WTC11 (cell line): ENCODE measurements at regions of chr2 and their contacts with region 1.

Region 1: DNA sequence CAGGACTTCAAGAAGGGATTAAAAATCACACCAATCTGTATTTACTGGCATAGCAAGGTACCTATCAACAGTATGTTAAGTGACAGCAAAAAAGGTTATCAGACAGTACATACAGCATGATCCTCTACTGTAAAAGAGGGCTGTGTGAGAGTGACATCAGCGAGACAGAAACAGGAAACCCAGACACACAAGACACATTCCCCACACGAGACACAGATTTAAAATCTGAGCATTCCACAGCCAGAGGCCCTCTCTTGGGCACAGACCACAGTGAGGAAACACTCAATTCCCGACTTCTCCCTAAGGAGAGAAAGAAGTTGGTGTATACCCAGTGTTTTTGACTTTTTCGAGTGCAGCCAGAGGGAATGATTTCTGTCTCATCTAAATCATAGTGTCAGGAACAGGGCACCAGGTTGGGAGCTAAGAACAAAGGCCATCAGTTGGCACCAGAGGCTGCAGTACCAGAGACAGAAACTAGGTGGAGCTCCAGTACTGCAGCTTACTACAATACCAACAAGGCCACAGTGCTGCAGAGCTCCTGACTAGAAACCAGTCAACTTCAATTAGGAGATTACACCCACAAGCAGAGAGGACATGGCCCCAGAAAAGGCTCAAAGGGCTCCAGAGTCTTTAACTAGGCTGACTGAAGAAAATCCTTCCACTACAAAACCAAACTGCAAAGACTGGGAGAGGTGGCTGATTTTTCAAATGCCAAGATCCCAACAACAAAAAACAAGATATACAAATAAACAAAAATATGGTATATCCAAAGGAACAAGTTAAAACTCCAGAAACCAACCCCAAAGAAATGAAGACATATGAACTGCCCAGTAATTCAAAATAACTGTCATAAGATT is 41.0 kb downstream of the UNC50 start:
- DNase-seq: peak; percentile 85
- ATAC-seq: peak; percentile 96
- H3K4me3 Mint-ChIP-seq: no peak overlapping the region
- H3K27ac Mint-ChIP-seq: no peak overlapping the region
- H3K4me1 Mint-ChIP-seq: peaks cover 8% of the 10 kb centered on the region
- H3K27me3 Mint-ChIP-seq: no peaks in the 10 kb centered on the region
- CTCF ChIP-seq: peak; percentile 97

Region 2: GRCh38 chr2:97911206-97911921 is 738.0 kb before region 1 on chr2:
- CTCF ChIA-PET with region 1: no interaction called
- POLR2A ChIA-PET with region 1: no interaction called
- DNase-seq: no peak
- ATAC-seq: no peak
- H3K4me3 Mint-ChIP-seq: no peak overlapping the region
- H3K27ac Mint-ChIP-seq: no peak overlapping the region
- H3K4me1 Mint-ChIP-seq: peaks cover 15% of the 10 kb centered on the region
- H3K27me3 Mint-ChIP-seq: no peaks in the 10 kb centered on the region
- CTCF ChIP-seq: no peak

Region 3: GRCh38 chr2:98385050-98385699 is 264.2 kb before region 1 on chr2:
- CTCF ChIA-PET with region 1: no interaction called
- POLR2A ChIA-PET with region 1: no interaction called
- DNase-seq: peak; percentile 87
- ATAC-seq: peak; percentile 88
- H3K4me3 Mint-ChIP-seq: no peak overlapping the region
- H3K27ac Mint-ChIP-seq: no peak overlapping the region
- H3K4me1 Mint-ChIP-seq: peaks cover 15% of the 10 kb centered on the region
- H3K27me3 Mint-ChIP-seq: peaks cover 5% of the 10 kb centered on the region; the same call in 1 of the 2 replicates
- CTCF ChIP-seq: peak; percentile 94

Region 4: GRCh38 chr2:98691303-98691702 is 41.9 kb after region 1 on chr2:
- CTCF ChIA-PET with region 1: interaction called, 11 read pairs
- POLR2A ChIA-PET with region 1: no interaction called
- DNase-seq: no peak
- ATAC-seq: no peak
- H3K4me3 Mint-ChIP-seq: no peak overlapping the region
- H3K27ac Mint-ChIP-seq: no peak overlapping the region
- H3K4me1 Mint-ChIP-seq: peaks cover 7% of the 10 kb centered on the region; the same call in 1 of the 2 replicates
- H3K27me3 Mint-ChIP-seq: no peaks in the 10 kb centered on the region; the same call in 1 of the 2 replicates
- CTCF ChIP-seq: no peak

Region 5: DNA sequence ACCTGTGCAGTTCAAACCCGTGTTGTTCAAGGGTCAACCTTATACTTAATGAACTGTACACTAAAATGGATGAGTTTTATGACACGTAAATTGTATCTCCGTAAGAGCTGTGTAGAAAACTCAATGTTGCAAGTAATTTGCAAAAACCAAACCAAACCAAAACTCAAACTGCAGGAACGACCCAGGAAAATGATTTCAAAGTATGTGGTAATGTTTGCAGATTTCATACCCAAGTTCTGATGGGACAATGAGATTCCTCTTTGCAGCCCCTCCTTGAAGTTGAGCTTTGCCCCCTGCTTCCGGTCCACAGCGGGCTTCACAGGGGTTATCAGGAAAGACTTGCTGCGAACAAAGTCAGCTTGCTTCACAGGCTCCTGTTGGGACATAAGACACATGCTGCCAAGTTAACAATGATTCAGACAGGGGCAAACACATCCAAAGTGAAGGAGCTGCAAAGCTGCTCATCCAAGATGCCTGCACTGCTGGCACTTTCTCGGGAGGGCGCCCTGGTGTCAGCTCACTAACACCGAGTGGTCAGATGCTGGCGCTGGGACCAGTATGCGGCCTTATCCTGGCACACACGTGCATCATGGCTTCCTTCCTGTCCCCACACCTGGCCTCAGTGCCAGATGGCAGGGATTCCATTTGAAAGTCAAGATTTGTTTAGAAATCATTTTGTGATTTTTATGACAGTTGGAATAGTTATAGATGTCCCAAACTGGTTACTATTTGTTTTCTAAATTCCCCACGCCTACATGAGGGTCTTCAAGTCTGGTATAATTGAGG is 146.7 kb after region 1 on chr2:
- CTCF ChIA-PET with region 1: interaction called, 20 read pairs
- POLR2A ChIA-PET with region 1: no interaction called
- DNase-seq: no peak
- ATAC-seq: no peak; the same call in 1 of the 2 replicates
- H3K4me3 Mint-ChIP-seq: no peak overlapping the region
- H3K27ac Mint-ChIP-seq: no peak overlapping the region
- H3K4me1 Mint-ChIP-seq: no peaks in the 10 kb centered on the region
- H3K27me3 Mint-ChIP-seq: no peaks in the 10 kb centered on the region; the same call in 1 of the 2 replicates
- CTCF ChIP-seq: no peak

Region 6: DNA sequence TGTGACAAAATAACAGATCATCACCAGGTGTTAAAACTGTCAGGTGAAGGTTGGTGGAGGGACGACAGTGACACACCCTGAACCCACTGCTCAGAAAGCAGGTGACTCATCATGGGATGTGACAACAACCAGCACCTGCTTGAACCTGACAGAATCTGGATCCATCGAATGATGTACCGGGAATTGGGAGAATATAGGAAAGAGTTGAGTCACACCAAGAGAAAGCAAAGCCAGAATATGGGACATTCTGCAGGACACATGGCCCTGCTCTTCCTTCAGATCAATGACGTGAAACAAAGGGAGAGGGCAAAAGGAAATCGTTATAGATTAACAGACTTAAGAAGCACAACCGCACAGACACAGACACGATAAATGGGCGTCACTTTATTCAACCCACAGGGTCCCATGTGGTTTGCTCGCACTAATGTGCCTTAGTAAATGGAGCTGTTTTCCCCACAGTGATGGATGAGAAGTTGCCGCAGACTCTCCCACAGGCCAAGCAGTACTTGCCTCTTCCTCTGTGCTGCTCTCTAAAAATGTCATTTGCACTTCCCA is 186.5 kb after region 1 on chr2:
- CTCF ChIA-PET with region 1: interaction called, 61 read pairs
- POLR2A ChIA-PET with region 1: interaction called, 3 read pairs
- DNase-seq: no peak
- ATAC-seq: no peak
- H3K4me3 Mint-ChIP-seq: no peak overlapping the region
- H3K27ac Mint-ChIP-seq: no peak overlapping the region
- H3K4me1 Mint-ChIP-seq: no peaks in the 10 kb centered on the region
- H3K27me3 Mint-ChIP-seq: no peaks in the 10 kb centered on the region
- CTCF ChIP-seq: no peak

Region 7: GRCh38 chr2:98936353-98937351 is 287.3 kb after region 1 on chr2:
- CTCF ChIA-PET with region 1: interaction called, 18 read pairs
- POLR2A ChIA-PET with region 1: no interaction called
- DNase-seq: peak; percentile 59
- ATAC-seq: peak; percentile 71
- H3K4me3 Mint-ChIP-seq: peak overlapping the region; percentile 69
- H3K27ac Mint-ChIP-seq: no peak overlapping the region
- H3K4me1 Mint-ChIP-seq: peaks cover 7% of the 10 kb centered on the region; the same call in 1 of the 2 replicates
- H3K27me3 Mint-ChIP-seq: peaks cover 61% of the 10 kb centered on the region
- CTCF ChIP-seq: no peak